Left colon (tissue), 2 donors: ENCODE measurements at regions of chr1 and their contacts with region 1.

Region 1: DNA sequence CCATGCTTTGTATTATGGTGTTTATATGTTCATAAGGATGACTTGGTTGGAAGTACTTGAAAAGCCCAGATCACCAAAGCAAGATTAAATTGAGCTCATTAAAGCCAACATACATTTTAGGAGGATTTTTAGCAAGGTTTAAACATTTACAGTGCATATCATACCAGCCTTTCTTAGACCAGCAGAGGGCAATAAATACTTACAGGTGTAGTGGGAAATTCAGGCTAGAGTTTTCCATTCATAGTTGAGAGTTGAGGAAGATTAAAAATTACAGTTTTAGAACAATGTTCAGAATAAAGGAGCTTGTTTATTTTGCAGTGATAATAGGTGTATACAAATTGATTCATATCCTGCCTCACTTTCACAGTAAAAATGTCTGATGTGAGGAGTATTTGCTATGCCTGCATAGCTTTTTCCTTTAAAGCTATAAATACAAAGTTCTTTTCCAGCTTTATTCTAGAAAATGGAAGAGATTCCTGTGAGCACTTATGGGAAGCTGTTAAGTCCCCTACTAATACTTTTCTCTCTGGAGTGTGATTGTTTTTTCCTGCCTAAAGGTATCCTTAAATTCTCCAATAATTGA is 35.3 kb downstream of the DTL start:
- DNase-seq: no peak
- ATAC-seq: peak; percentile 85

Region 2: GRCh38 chr1:212138441-212138840 is 67.6 kb after region 1 on chr1:
- intact Hi-C with region 1: no loop called
- DNase-seq: no peak
- ATAC-seq: no peak

Region 3: DNA sequence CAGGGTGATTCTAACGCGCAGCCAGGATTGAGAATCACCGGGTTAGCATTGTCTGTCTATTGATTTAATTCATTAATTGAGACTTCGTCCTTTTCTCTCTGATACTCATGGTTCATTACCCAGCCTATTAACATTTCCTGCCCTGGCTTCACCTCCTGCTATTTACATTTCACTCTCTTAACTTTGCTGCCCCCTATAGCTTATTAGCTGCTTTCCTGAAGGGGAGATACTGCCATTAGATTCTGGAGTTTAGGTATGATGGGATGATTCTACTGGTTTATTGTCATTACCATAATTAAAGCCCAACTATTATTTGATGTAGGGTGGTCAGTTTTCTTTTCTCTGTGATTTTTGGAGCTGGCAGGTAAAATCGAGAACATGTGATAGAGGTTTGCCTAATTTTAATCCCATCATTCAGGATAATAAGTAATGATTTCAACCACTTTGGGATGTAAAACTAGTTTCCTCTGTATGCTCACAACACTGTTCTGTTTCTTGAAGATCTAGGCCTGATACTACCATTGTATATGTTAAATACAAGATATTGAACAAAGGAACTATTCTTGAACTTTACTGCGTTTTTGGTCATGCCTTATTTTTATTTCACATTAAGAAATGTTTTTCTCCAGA is 220.8 kb after region 1 on chr1:
- intact Hi-C with region 1: loop called in 1 of 2 experiments (anchors 5 kb)
- DNase-seq: no peak
- ATAC-seq: peak; percentile 59

Region 4: DNA sequence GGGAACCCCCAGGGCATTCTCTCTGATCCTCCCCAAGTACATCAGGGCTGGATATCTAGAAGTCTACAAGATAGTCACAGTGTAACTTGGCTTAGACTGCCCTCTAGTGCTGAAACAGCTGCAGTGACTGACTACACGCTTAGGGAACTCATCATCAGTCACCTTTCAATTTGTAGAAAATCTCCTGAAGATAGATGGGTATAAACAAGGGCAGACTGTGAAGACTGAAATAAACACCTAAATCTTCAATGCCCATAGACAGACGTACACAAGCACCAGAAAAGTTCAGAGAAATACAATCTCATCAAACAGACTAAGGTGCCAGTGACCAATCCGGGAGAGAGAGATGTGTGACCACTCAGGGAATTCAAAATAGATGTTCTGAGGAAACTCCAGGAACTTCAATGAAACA is 297.3 kb after region 1 on chr1:
- intact Hi-C with region 1: loop called in 1 of 2 experiments (anchors 5 kb)
- DNase-seq: peak in 1 of 2 donors; percentile 37
- ATAC-seq: peak; percentile 95